Naive thymus-derived CD4-positive, alpha-beta T cell (primary cell): ENCODE measurements at regions of chrX and their contacts with region 1.

Region 1: GRCh38 chrX:118345401-118346257 is at the start of gene WDR44:
- DNase-seq: peak; percentile 79 to 95 (median 92)
- ATAC-seq: peak; percentile 95
- H3K4me3 ChIP-seq: peak within 1 kb of the TSS; percentile 87
- H3K4me3 Mint-ChIP-seq: peak within 1 kb of the TSS; percentile 87 to 99 (median 98)
- H3K27ac ChIP-seq: peak within 1 kb of the TSS; percentile 93
- H3K27ac Mint-ChIP-seq: peak within 1 kb of the TSS; percentile 92 to 99 (median 96)
- H3K4me1 ChIP-seq: peaks cover 19 to 24% of the 10 kb centered on the region in 2 donors
- H3K4me1 Mint-ChIP-seq: peaks cover 5 to 40% (median 36%) of the 10 kb centered on the region in 7 donors
- H3K27me3 ChIP-seq: no peaks in the 10 kb centered on the region
- H3K27me3 Mint-ChIP-seq: no peaks in the 10 kb centered on the region
- total RNA-seq, gene WDR44: 12.0 to 19.0 (median 17.0) TPM

Region 2: DNA sequence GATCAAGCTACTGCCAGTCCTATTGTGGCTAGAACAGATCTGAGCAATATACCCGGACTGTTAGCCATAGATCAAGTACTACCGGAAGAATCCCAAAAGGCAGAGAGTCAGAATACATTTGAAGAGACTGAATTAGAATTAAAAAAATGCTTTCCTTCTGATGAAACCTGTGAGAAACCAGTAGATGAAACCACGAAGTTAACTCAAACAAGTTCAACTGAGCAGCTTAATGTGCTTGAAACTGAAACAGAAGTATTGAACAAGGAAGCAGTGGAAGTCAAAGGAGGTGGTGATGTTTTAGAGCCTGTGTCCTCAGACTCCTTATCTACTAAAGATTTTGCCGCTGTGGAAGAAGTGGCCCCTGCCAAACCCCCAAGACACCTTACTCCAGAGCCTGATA is 47.1 kb after region 1 on chrX:
- CTCF ChIA-PET with region 1: no interaction called
- POLR2A ChIA-PET with region 1: no interaction called
- intact Hi-C with region 1: loop called (anchors 5 to 10 kb)
- DNase-seq: no peak
- ATAC-seq: no peak
- H3K4me3 ChIP-seq: no peak overlapping the region
- H3K4me3 Mint-ChIP-seq: no peak overlapping the region
- H3K27ac ChIP-seq: no peak overlapping the region
- H3K27ac Mint-ChIP-seq: peak overlapping the region in 1 of 9 donors; percentile 55
- H3K4me1 ChIP-seq: no peaks in the 10 kb centered on the region
- H3K4me1 Mint-ChIP-seq: peaks cover 0 to 12% (median 0%) of the 10 kb centered on the region in 7 donors
- H3K27me3 ChIP-seq: no peaks in the 10 kb centered on the region
- H3K27me3 Mint-ChIP-seq: no peaks in the 10 kb centered on the region

Region 3: GRCh38 chrX:118528071-118528737 is 182.6 kb after region 1 on chrX:
- CTCF ChIA-PET with region 1: no interaction called
- POLR2A ChIA-PET with region 1: no interaction called
- intact Hi-C with region 1: loop called in 1 of 2 experiments (anchors 2 kb)
- DNase-seq: peak in 8 of 9 donors; percentile 41 to 73 (median 68)
- ATAC-seq: peak; percentile 82
- H3K4me3 ChIP-seq: peak overlapping the region; percentile 65
- H3K4me3 Mint-ChIP-seq: peak overlapping the region; percentile 83 to 97 (median 90)
- H3K27ac ChIP-seq: peak overlapping the region; percentile 75
- H3K27ac Mint-ChIP-seq: peak overlapping the region; percentile 89 to 100 (median 96)
- H3K4me1 ChIP-seq: peaks cover 54 to 61% of the 10 kb centered on the region in 2 donors
- H3K4me1 Mint-ChIP-seq: peaks cover 48 to 83% (median 75%) of the 10 kb centered on the region in 7 donors
- H3K27me3 ChIP-seq: no peaks in the 10 kb centered on the region
- H3K27me3 Mint-ChIP-seq: no peaks in the 10 kb centered on the region

Region 4: DNA sequence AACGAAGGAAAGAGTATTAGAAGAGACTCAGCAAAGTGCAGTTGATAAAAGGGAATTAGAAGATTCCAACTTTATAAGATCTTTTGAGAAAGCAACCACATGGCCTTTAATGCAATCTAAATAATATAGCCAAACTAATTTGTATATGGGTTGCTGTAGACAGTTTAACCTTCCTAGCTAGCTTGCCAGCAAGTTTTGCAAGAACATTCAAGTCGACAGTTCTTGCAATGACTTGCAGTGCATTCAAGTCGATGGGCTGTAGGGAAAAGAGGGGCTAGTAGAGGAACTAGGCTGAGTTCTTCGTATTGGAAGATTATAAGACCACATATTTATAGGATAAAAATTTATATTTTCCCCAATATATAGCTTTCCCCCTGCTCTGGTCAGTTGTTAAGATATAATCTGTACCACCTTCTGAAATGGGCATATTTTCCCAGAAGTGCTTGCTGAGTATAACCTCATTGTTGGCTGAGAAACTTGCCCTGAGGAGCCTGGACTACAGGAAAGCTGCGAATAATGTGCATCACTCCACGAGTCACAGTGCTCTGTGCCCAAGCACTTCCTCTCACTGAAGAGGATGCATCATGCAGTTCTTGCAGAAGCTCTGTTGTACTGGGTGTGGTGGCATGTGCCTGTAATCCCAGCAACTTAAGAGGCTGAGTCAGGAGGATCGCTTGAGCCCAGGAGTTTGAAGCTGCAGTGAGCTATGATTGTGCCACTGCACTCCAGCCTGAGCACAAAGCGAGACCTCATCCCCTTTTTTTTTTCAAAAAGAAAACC is 206.7 kb after region 1 on chrX:
- CTCF ChIA-PET with region 1: no interaction called
- POLR2A ChIA-PET with region 1: no interaction called
- intact Hi-C with region 1: no loop called
- DNase-seq: no peak
- ATAC-seq: peak; percentile 74
- H3K4me3 ChIP-seq: no peak overlapping the region
- H3K4me3 Mint-ChIP-seq: no peak overlapping the region
- H3K27ac ChIP-seq: no peak overlapping the region
- H3K27ac Mint-ChIP-seq: peak overlapping the region in 4 of 9 donors; percentile 21 to 67 (median 42)
- H3K4me1 ChIP-seq: no peaks in the 10 kb centered on the region
- H3K4me1 Mint-ChIP-seq: peaks cover 4 to 30% (median 11%) of the 10 kb centered on the region in 7 donors
- H3K27me3 ChIP-seq: no peaks in the 10 kb centered on the region
- H3K27me3 Mint-ChIP-seq: no peaks in the 10 kb centered on the region

Region 5: DNA sequence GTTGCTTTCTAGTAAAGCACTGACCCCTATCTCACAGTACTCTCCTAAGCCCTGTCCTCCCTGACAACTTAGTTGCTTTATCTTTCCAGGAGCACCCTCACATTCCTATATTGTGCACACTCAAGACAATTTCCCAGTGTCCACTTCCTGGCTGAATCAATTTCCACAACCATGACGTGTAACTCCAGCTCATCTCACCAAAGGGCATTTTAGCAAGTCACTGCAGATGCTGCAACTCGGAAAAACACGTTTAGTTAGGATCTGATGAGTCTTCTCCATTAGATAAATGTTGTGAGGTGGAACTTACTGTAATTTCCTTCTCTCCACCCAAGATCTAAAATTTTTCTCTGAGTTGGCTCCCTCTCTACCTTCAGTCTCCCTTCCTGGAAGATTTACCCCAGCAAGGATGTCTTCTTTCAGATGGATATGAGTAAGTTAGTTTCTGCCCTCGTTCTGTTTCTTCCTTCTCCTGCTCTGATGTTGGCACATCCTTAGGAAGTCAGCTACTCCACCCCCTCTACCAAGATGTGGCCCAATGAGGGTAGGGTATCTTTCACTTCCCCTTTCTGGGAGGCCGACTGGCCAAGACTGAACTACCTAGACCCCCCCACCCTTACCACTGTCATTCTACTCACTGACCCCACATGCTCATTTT is 353.0 kb after region 1 on chrX:
- CTCF ChIA-PET with region 1: no interaction called
- POLR2A ChIA-PET with region 1: no interaction called
- intact Hi-C with region 1: no loop called
- DNase-seq: no peak
- ATAC-seq: peak; percentile 75
- H3K4me3 ChIP-seq: no peak overlapping the region
- H3K4me3 Mint-ChIP-seq: no peak overlapping the region
- H3K27ac ChIP-seq: no peak overlapping the region
- H3K27ac Mint-ChIP-seq: peak overlapping the region in 8 of 9 donors; percentile 2 to 80 (median 51)
- H3K4me1 ChIP-seq: no peaks in the 10 kb centered on the region
- H3K4me1 Mint-ChIP-seq: peaks cover 0 to 5% (median 0%) of the 10 kb centered on the region in 7 donors
- H3K27me3 ChIP-seq: no peaks in the 10 kb centered on the region
- H3K27me3 Mint-ChIP-seq: no peaks in the 10 kb centered on the region

Region 6: GRCh38 chrX:118974088-118974907 is 628.7 kb after region 1 on chrX and contains the start of gene LONRF3:
- CTCF ChIA-PET with region 1: no interaction called
- POLR2A ChIA-PET with region 1: no interaction called
- intact Hi-C with region 1: loop called in 1 of 2 experiments (anchors 10 kb)
- DNase-seq: peak; percentile 26 to 71 (median 56)
- ATAC-seq: peak; percentile 65
- H3K4me3 ChIP-seq: peak within 1 kb of the TSS; percentile 64
- H3K4me3 Mint-ChIP-seq: peak within 1 kb of the TSS; percentile 86 to 100 (median 92)
- H3K27ac ChIP-seq: peak within 1 kb of the TSS; percentile 74
- H3K27ac Mint-ChIP-seq: peak within 1 kb of the TSS; percentile 38 to 94 (median 90)
- H3K4me1 ChIP-seq: peaks cover 0 to 3% of the 10 kb centered on the region in 2 donors
- H3K4me1 Mint-ChIP-seq: peaks cover 0 to 24% (median 17%) of the 10 kb centered on the region in 7 donors
- H3K27me3 ChIP-seq: no peaks in the 10 kb centered on the region
- H3K27me3 Mint-ChIP-seq: peaks cover 0 to 57% (median 5%) of the 10 kb centered on the region in 5 donors
- total RNA-seq, gene LONRF3: 0.07 to 17.8 (median 11.5) TPM